PC-3 (cell line): ENCODE measurements at regions of chr3 and their contacts with region 1.

Region 1: DNA sequence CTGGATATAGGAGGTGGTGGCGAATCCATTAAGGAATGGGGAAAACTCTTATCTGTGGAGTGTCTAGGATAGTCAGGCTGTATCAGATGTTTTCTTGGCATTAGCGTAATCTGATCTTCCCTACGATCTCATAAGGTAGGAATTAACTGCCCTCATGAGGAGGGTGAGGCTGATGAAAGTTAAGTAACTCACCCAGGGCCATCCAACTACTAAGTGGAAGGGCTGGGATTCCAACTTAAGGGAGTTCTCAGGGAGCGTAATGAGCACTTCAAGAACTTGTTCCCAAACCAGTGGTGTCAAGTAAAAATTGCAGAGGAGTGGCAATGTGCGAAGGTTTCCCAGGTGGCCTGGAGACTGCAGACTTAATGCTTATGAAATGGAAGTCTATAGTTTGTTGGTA is 55.9 kb upstream of the OSBPL11 start:
- DNase-seq: peak; percentile 27
- ATAC-seq: peak; percentile 49
- H3K4me3 ChIP-seq: no peak overlapping the region
- H3K27ac ChIP-seq: no peak overlapping the region
- H3K4me1 ChIP-seq: peaks cover 4% of the 10 kb centered on the region; the same call in 1 of the 2 replicates
- H3K27me3 ChIP-seq: no peaks in the 10 kb centered on the region
- CTCF ChIP-seq: no peak

Region 2: DNA sequence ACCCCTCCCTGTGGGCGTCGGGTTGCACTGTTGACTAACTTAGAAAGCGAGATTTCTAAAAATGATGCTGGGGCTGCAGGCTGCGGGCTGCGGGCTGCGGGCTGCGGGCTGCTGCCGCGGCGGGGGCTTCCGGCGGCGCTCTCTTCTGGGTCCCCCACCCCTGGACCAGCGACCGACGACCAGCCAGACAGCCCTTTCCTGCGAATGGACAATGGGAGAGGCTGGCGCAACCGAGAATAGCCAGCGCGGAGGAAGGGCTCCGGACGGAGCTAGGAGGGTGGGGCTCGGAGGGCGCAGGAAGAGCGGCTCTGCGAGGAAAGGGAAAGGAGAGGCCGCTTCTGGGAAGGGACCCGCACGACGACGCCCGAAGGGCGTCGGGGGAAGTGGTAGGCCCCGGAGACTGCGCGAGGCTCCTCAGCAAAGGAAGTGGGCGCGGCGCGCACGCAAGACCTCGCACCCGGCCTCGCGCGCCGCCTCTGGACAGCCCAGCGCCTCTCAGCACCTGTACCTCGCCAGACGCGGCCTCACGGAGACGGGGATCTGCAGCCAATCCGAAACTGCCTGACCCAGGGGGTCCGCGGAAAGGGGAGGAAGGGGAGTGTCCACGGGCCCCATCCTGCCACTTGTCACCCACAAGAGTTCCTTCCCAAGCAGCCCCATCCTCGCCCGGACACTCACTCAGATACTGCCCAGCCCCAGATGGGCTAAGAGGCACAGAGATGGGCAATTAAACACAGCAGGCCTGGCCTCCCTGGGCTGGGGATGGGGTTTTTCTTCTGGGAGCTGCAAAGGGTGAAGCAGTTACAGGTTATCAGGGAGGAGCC is 509.4 kb before region 1 on chr3:
- CTCF ChIA-PET with region 1: no interaction called
- POLR2A ChIA-PET with region 1: no interaction called
- intact Hi-C with region 1: no loop called
- DNase-seq: no peak
- ATAC-seq: no peak
- H3K4me3 ChIP-seq: no peak overlapping the region
- H3K27ac ChIP-seq: no peak overlapping the region
- H3K4me1 ChIP-seq: peaks cover 6% of the 10 kb centered on the region; the same call in 1 of the 2 replicates
- H3K27me3 ChIP-seq: no peaks in the 10 kb centered on the region
- CTCF ChIP-seq: no peak

Region 3: DNA sequence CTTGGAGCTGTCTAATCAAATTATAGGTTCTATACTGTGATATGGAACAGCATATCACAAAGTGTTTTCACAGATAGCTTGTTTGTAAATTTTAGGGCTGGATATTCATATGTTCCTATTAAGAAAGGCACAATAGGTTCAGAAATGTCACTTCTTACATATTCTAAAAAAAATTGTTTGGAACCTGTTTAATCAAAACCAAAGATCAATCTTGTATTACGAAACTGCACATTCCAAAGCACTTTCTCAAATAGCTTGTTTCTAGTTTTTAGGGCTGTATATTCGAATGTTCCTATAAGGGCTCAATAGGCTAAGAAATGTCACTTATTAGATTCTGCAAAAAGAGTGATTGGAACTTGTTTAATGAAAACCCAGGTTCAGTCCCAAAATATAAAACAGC is 11.4 kb after region 1 on chr3:
- CTCF ChIA-PET with region 1: no interaction called
- POLR2A ChIA-PET with region 1: interaction called, 12 read pairs
- intact Hi-C with region 1: no loop called
- DNase-seq: no peak
- ATAC-seq: no peak
- H3K4me3 ChIP-seq: no peak overlapping the region
- H3K27ac ChIP-seq: no peak overlapping the region
- H3K4me1 ChIP-seq: no peaks in the 10 kb centered on the region
- H3K27me3 ChIP-seq: no peaks in the 10 kb centered on the region
- CTCF ChIP-seq: no peak